Common myeloid progenitor, CD34-positive (primary cell): ENCODE measurements at regions of chr12 and their contacts with region 1.

Region 1: DNA sequence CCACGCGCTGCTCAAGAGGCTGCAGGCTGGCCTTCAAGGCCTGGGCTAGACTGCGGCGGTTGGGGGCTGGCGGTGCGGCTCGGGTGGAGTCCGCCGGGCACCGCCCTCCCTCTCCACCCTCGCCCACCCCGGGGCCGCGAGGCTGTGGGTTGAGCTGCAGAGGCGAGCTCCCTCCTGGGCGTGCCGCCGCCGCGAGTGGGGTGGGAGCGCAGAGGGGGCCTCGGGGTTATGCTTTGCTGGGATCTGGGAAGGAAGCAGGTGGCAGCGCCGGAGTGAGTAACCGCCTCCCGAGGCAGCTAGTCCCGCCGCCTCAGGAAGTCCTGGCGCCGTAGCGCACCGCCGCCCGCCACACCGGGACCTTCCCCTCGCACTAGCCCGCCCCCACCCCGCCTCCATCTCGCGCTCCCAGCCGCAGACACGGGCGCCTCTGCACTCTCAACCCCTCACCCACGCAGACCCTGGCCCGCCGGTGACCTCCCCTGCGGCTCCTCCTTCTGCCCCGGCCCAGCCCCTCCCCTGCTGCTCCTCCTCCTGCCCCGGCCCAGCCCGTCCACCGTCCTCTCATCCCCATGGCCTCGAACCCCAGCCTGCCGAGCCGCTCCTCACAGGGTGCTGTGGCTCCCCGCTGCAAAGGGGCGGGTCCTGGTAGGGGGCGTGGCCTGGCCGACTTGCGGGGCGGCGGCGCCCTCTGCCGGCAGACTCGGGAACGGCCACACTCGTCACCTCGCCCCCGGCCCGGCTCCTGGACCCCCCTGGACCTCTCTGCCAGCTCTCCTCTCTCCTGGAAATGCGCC is 16.6 kb downstream of the TAMALIN start:
- DNase-seq: peak; percentile 83 to 95 (median 90)
- H3K4me3 ChIP-seq: peak overlapping the region; percentile 51 to 86 (median 70)
- H3K27ac ChIP-seq: peak overlapping the region; percentile 25 to 78
- H3K4me1 ChIP-seq: peaks cover 8 to 46% (median 43%) of the 10 kb centered on the region in 4 experiments
- H3K27me3 ChIP-seq: no peaks in the 10 kb centered on the region

Region 2: GRCh38 chr12:51246254-51246853 is 777.0 kb before region 1 on chr12:
- CTCF ChIA-PET with region 1: no interaction called
- POLR2A ChIA-PET with region 1: no interaction called
- DNase-seq: peak; percentile 71 to 80 (median 75)
- H3K4me3 ChIP-seq: peak overlapping the region in 4 of 7 experiments; percentile 1 to 56 (median 39)
- H3K27ac ChIP-seq: peak overlapping the region in 1 of 2 experiments; percentile 50
- H3K4me1 ChIP-seq: peaks cover 17 to 43% (median 26%) of the 10 kb centered on the region in 4 experiments
- H3K27me3 ChIP-seq: no peaks in the 10 kb centered on the region

Region 3: GRCh38 chr12:51631591-51631990 is 391.8 kb before region 1 on chr12:
- CTCF ChIA-PET with region 1: no interaction called
- POLR2A ChIA-PET with region 1: no interaction called
- DNase-seq: peak in 2 of 3 donors; percentile 20 to 33
- H3K4me3 ChIP-seq: no peak overlapping the region
- H3K27ac ChIP-seq: no peak overlapping the region
- H3K4me1 ChIP-seq: no peaks in the 10 kb centered on the region
- H3K27me3 ChIP-seq: no peaks in the 10 kb centered on the region

Region 4: GRCh38 chr12:51661836-51662235 is 361.5 kb before region 1 on chr12:
- CTCF ChIA-PET with region 1: no interaction called
- POLR2A ChIA-PET with region 1: no interaction called
- DNase-seq: no peak
- H3K4me3 ChIP-seq: no peak overlapping the region
- H3K27ac ChIP-seq: no peak overlapping the region
- H3K4me1 ChIP-seq: no peaks in the 10 kb centered on the region
- H3K27me3 ChIP-seq: peaks cover 0 to 3% (median 0%) of the 10 kb centered on the region in 5 experiments

Region 5: DNA sequence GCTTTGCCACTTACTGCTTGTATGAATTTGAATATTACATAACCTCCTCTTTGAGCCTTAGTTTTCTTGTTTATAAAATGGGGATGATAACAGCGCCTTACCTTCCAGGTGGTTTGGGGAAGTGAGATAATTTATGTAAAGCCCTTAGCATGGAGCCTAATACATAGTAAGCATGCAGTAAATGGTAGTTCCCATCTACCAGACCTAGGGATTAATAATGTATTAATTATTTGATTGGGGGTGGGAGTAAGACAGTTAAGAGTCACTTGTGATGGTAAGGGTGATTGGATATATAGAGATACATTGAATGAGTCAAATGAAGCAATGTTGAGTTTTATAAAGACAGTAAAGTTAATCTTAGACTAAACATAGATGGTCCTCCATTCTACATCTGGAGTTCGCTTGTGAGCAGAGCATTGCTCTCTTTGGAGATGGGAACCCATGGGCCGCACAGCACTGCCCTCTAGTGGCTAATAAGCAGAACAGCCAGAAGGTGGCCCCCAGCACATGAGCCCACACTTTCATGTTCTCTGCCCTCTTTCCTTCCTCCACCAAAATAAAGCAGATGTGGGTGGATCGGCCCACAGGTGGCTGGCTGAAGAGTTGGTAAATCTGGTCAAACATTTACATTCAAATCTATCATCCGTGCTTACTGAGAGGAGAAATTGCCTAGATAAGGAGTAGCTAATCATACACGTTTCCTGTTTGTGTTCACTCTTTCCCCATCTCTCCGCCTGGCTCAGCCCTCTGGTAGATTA is 43.1 kb before region 1 on chr12:
- CTCF ChIA-PET with region 1: interaction called, 28 read pairs
- POLR2A ChIA-PET with region 1: interaction called, 5 read pairs
- DNase-seq: peak; percentile 67 to 84 (median 80)
- H3K4me3 ChIP-seq: no peak overlapping the region
- H3K27ac ChIP-seq: no peak overlapping the region
- H3K4me1 ChIP-seq: peaks cover 3 to 29% (median 7%) of the 10 kb centered on the region in 4 experiments
- H3K27me3 ChIP-seq: no peaks in the 10 kb centered on the region

Region 6: GRCh38 chr12:52004042-52004648 is 19.2 kb before region 1 on chr12:
- CTCF ChIA-PET with region 1: interaction called, 437 read pairs
- POLR2A ChIA-PET with region 1: interaction called, 120 read pairs
- DNase-seq: no peak
- H3K4me3 ChIP-seq: no peak overlapping the region
- H3K27ac ChIP-seq: no peak overlapping the region
- H3K4me1 ChIP-seq: peaks cover 3 to 38% (median 32%) of the 10 kb centered on the region in 4 experiments
- H3K27me3 ChIP-seq: peaks cover 0 to 12% (median 8%) of the 10 kb centered on the region in 5 experiments

Region 7: GRCh38 chr12:52069327-52070184 is 46.2 kb after region 1 on chr12 and contains the start of gene ATG101:
- CTCF ChIA-PET with region 1: interaction called, 661 read pairs
- POLR2A ChIA-PET with region 1: interaction called, 11 read pairs
- DNase-seq: peak; percentile 96 to 98 (median 97)
- H3K4me3 ChIP-seq: peak within 1 kb of the TSS; percentile 69 to 99 (median 93)
- H3K27ac ChIP-seq: peak within 1 kb of the TSS; percentile 95 to 98
- H3K4me1 ChIP-seq: peaks cover 4 to 19% (median 18%) of the 10 kb centered on the region in 4 experiments
- H3K27me3 ChIP-seq: no peaks in the 10 kb centered on the region

Region 8: GRCh38 chr12:52121824-52122539 is 98.6 kb after region 1 on chr12:
- CTCF ChIA-PET with region 1: interaction called, 61 read pairs
- POLR2A ChIA-PET with region 1: no interaction called
- DNase-seq: peak; percentile 42 to 67 (median 63)
- H3K4me3 ChIP-seq: no peak overlapping the region
- H3K27ac ChIP-seq: no peak overlapping the region
- H3K4me1 ChIP-seq: peaks cover 0 to 15% (median 4%) of the 10 kb centered on the region in 4 experiments
- H3K27me3 ChIP-seq: peaks cover 0 to 26% (median 7%) of the 10 kb centered on the region in 5 experiments

Region 9: GRCh38 chr12:52156736-52157565 is 133.6 kb after region 1 on chr12:
- CTCF ChIA-PET with region 1: no interaction called
- POLR2A ChIA-PET with region 1: no interaction called
- DNase-seq: peak; percentile 55 to 72 (median 61)
- H3K4me3 ChIP-seq: no peak overlapping the region
- H3K27ac ChIP-seq: no peak overlapping the region
- H3K4me1 ChIP-seq: peaks cover 0 to 7% (median 2%) of the 10 kb centered on the region in 4 experiments
- H3K27me3 ChIP-seq: peaks cover 0 to 12% (median 2%) of the 10 kb centered on the region in 5 experiments